ENCODE measurements at regions of chr6 and their contacts with region 1.

Region 1: GRCh38 chr6:133577851-133578250 is 311.1 kb upstream of the TCF21 start:
- DNase-seq: no peak
- ATAC-seq: peak in 3 of 4 donors; percentile 91 to 95 (median 93)
- H3K4me3 ChIP-seq: no peak overlapping the region
- H3K27ac ChIP-seq: peak overlapping the region; percentile 74
- H3K4me1 ChIP-seq: no peaks in the 10 kb centered on the region
- H3K27me3 ChIP-seq: no peaks in the 10 kb centered on the region
- CTCF ChIP-seq: no peak

Region 2: GRCh38 chr6:133804263-133804662 is 226.4 kb after region 1 on chr6:
- intact Hi-C with region 1: no loop called
- DNase-seq: no peak
- ATAC-seq: peak in 3 of 4 donors; percentile 32 to 57 (median 51)
- H3K4me3 ChIP-seq: no peak overlapping the region
- H3K27ac ChIP-seq: no peak overlapping the region
- H3K4me1 ChIP-seq: no peaks in the 10 kb centered on the region
- H3K27me3 ChIP-seq: no peaks in the 10 kb centered on the region
- CTCF ChIP-seq: no peak

Region 3: GRCh38 chr6:133837801-133838349 is 260.0 kb after region 1 on chr6:
- intact Hi-C with region 1: loop called in 1 of 2 experiments (anchors 10 kb)
- DNase-seq: peak; percentile 40 to 59
- ATAC-seq: peak in 3 of 4 donors; percentile 49 to 78 (median 61)
- H3K4me3 ChIP-seq: peak overlapping the region; percentile 63
- H3K27ac ChIP-seq: no peak overlapping the region
- H3K4me1 ChIP-seq: no peaks in the 10 kb centered on the region
- H3K27me3 ChIP-seq: peaks cover 0 to 4% (median 3%) of the 10 kb centered on the region in 3 donors
- CTCF ChIP-seq: peak; percentile 61

Measured in psoas muscle (tissue), 8 donors.